ENCODE measurements at regions of chr12 and their contacts with region 1.

Region 1: GRCh38 chr12:80829767-80830166 is 108.0 kb downstream of the LIN7A start:
- DNase-seq: no peak
- H3K4me3 Mint-ChIP-seq: no peak overlapping the region
- H3K27ac Mint-ChIP-seq: no peak overlapping the region
- H3K4me1 Mint-ChIP-seq: peaks cover 5% of the 10 kb centered on the region
- H3K27me3 Mint-ChIP-seq: no peaks in the 10 kb centered on the region

Region 2: GRCh38 chr12:80636832-80637231 is 192.9 kb before region 1 on chr12:
- intact Hi-C with region 1: no loop called
- DNase-seq: no peak
- H3K4me3 Mint-ChIP-seq: no peak overlapping the region
- H3K27ac Mint-ChIP-seq: no peak overlapping the region
- H3K4me1 Mint-ChIP-seq: no peaks in the 10 kb centered on the region
- H3K27me3 Mint-ChIP-seq: no peaks in the 10 kb centered on the region

Region 3: DNA sequence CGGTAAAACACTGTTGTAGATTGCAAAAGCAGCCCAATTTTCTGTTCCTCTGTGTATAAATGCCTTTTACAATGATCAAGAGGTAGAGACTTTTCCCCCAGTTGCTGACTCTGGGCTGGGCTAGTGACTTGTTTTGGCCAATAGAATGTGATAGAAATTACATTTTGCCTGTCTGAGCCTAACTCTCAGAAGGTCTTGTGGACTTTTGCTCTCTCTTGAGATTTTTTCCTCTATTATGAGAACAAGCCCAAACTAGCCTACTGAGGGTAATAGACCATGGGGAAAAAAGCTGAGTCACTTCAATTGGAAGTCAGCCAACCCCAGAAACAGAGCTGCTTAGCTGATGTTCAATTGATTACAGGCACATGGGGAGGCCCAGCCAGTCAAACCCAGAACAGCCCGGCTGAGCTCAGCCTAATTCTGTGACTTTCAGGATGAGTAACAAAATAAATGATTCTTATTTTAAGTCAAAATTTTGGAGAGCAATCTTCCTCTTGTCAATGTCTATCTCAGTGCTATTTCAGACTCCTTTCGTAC is 51.7 kb before region 1 on chr12:
- intact Hi-C with region 1: loop called (anchors 5 kb)
- DNase-seq: peak; percentile 29
- H3K4me3 Mint-ChIP-seq: no peak overlapping the region
- H3K27ac Mint-ChIP-seq: peak overlapping the region; percentile 21
- H3K4me1 Mint-ChIP-seq: peaks cover 25% of the 10 kb centered on the region
- H3K27me3 Mint-ChIP-seq: no peaks in the 10 kb centered on the region